ENCODE measurements at regions of chr17 and their contacts with region 1.

Region 1: GRCh38 chr17:47388825-47389224 is 65.1 kb downstream of the EFCAB13 start:
- DNase-seq: no peak
- ATAC-seq: no peak
- H3K4me3 ChIP-seq: no peak overlapping the region
- H3K27ac ChIP-seq: no peak overlapping the region
- H3K4me1 ChIP-seq: no peaks in the 10 kb centered on the region
- H3K27me3 ChIP-seq: no peaks in the 10 kb centered on the region
- CTCF ChIP-seq: no peak
- POLR2A ChIP-seq: no peak
- RAD21 ChIP-seq: no peak

Region 2: GRCh38 chr17:47335101-47335936 is 53.5 kb before region 1 on chr17:
- CTCF ChIA-PET with region 1: no interaction called
- POLR2A ChIA-PET with region 1: no interaction called
- dilution Hi-C with region 1: no loop called
- in situ Hi-C with region 1: no loop called
- intact Hi-C with region 1: loop called (anchors 5 kb)
- DNase-seq: no peak
- ATAC-seq: no peak; the same call in 1 of the 2 replicates
- H3K4me3 ChIP-seq: no peak overlapping the region
- H3K27ac ChIP-seq: no peak overlapping the region
- H3K4me1 ChIP-seq: no peaks in the 10 kb centered on the region
- H3K27me3 ChIP-seq: no peaks in the 10 kb centered on the region
- CTCF ChIP-seq: no peak
- POLR2A ChIP-seq: no peak
- RAD21 ChIP-seq: no peak

Region 3: GRCh38 chr17:48084932-48085444 is 696.2 kb after region 1 on chr17:
- CTCF ChIA-PET with region 1: no interaction called
- POLR2A ChIA-PET with region 1: no interaction called
- dilution Hi-C with region 1: no loop called
- in situ Hi-C with region 1: no loop called
- intact Hi-C with region 1: no loop called
- DNase-seq: no peak
- ATAC-seq: no peak
- H3K4me3 ChIP-seq: no peak overlapping the region
- H3K27ac ChIP-seq: no peak overlapping the region
- H3K4me1 ChIP-seq: peaks cover 4% of the 10 kb centered on the region; the same call in 1 of the 2 replicates
- H3K27me3 ChIP-seq: no peaks in the 10 kb centered on the region
- CTCF ChIP-seq: no peak
- POLR2A ChIP-seq: no peak
- RAD21 ChIP-seq: no peak

Measured in IMR-90 (cell line).